ENCODE measurements at regions of chr19 and their contacts with region 1.

Region 1: GRCh38 chr19:35748106-35749020 is at the start of gene LIN37:
- DNase-seq: peak; percentile 99
- H3K4me3 Mint-ChIP-seq: peak within 1 kb of the TSS; percentile 90
- H3K27ac Mint-ChIP-seq: peak within 1 kb of the TSS; percentile 93
- H3K4me1 Mint-ChIP-seq: peaks cover 45% of the 10 kb centered on the region
- H3K27me3 Mint-ChIP-seq: no peaks in the 10 kb centered on the region
- CTCF ChIP-seq: no peak
- total RNA-seq, gene LIN37: 12.4 and 15.9 TPM in 2 replicates

Region 2: GRCh38 chr19:35055715-35056179 is 692.6 kb before region 1 on chr19:
- CTCF ChIA-PET with region 1: interaction called, 10 read pairs
- intact Hi-C with region 1: no loop called
- DNase-seq: peak; percentile 77
- H3K4me3 Mint-ChIP-seq: no peak overlapping the region
- H3K27ac Mint-ChIP-seq: no peak overlapping the region
- H3K4me1 Mint-ChIP-seq: peaks cover 9% of the 10 kb centered on the region
- H3K27me3 Mint-ChIP-seq: no peaks in the 10 kb centered on the region
- CTCF ChIP-seq: peak; percentile 77

Region 3: GRCh38 chr19:35822579-35822978 is 74.2 kb after region 1 on chr19:
- CTCF ChIA-PET with region 1: interaction called, 11 read pairs
- intact Hi-C with region 1: no loop called
- DNase-seq: no peak
- H3K4me3 Mint-ChIP-seq: no peak overlapping the region
- H3K27ac Mint-ChIP-seq: no peak overlapping the region
- H3K4me1 Mint-ChIP-seq: no peaks in the 10 kb centered on the region
- H3K27me3 Mint-ChIP-seq: peaks cover 77% of the 10 kb centered on the region
- CTCF ChIP-seq: no peak

Region 4: DNA sequence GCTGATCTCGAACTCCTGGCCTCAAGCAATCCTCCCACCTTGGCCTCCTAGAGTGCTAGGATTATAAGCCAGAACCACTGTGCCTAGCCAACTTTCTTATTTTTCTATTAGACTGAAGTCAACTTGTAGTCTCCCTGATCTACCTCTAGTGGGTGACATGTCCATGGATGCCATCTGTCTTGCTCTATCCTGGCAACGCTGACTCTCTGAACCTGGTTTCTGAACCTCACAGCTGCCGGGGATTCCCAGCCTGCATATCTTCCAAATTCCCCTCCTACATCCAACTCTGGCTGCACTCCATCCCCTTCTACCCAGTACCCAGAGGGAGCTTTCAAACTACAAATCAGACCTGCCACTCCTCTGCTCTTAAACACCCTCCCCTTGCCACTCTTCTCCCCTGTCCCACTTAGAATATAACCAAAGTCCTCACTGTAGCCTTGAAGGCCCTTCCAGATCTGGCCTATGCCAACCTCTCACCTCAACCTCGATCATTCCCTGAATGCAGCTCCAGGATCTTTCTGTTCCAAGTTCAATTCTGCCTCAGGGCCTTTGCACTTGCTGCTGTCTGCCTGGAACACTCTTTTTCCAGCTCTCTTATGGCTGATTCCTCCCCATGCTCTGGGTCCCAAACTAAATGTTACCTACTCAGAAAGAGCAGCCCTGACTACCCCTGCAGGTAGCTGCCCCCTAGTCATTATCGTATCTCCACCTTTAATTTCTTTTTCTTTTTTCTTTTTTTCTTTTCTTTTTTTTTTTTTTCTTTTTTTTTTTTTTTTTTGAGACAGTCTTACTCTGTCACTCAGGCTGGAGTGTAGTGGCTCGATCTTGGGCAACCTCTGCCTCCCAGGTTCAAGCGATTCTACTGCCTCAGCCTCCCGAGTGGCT is 282.1 kb after region 1 on chr19:
- CTCF ChIA-PET with region 1: interaction called, 13 read pairs
- intact Hi-C with region 1: no loop called
- DNase-seq: no peak
- H3K4me3 Mint-ChIP-seq: no peak overlapping the region
- H3K27ac Mint-ChIP-seq: no peak overlapping the region
- H3K4me1 Mint-ChIP-seq: no peaks in the 10 kb centered on the region
- H3K27me3 Mint-ChIP-seq: no peaks in the 10 kb centered on the region
- CTCF ChIP-seq: no peak